Endothelial cell of umbilical vein (primary cell): ENCODE measurements at regions of chr20 and their contacts with region 1.

Region 1: GRCh38 chr20:33731693-33732165 is at the start of gene ZNF341:
- DNase-seq: peak; percentile 74
- H3K4me3 ChIP-seq: peak within 1 kb of the TSS; percentile 17 to 59 (median 51)
- H3K27ac ChIP-seq: peak within 1 kb of the TSS; percentile 53
- H3K4me1 ChIP-seq: peaks cover 22% of the 10 kb centered on the region
- H3K27me3 ChIP-seq: no peaks in the 10 kb centered on the region
- CTCF ChIP-seq: peak; percentile 89 to 96
- POLR2A ChIP-seq: peak; percentile 22
- total RNA-seq, gene ZNF341: 3.9 and 4.9 TPM in 2 replicates

Region 2: DNA sequence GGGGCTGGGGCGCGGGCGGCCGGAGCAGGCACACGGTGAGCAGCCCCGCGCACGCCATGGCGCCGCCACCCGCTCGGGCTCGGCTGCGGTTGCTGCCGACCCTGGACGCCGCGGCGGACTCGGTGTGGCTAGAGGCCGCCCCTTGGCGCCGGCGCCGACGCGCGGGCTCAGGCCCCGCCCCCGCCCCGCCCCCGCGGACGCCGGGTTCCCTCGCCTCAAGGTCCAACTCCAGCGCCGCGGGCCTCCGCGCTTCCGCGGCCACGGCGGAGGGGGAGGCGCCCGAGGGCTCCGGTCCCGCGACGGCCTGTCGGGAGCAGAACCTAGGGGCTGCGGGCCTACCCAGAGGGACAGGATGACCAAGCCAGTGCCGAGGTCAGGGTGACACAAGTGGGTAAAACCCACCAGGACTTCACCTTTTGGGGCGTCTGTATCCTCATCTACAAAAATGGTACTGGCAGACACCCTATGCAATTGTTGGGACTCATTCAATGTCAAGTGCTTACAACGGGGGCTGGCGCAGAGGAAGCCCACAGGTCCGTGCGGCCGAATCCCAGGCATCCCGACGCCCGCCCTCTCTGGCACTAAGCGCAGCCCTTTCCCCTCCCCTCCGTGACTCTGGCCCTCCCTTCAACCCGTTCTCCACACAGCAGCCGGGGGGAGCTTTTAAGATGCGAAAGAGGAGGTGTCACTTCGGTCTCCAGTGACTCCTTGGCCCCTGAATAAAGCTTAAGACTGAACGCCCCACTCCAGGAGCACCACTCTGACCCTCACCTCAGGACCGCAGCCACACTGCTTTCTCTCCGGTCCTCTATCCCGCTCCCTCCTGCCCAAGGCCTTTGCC is 57.2 kb before region 1 on chr20 and contains the start of gene NECAB3:
- CTCF ChIA-PET with region 1: interaction called, 3 read pairs
- POLR2A ChIA-PET with region 1: no interaction called
- dilution Hi-C with region 1: no loop called
- intact Hi-C with region 1: loop called (anchors 1 kb)
- DNase-seq: peak; percentile 84
- H3K4me3 ChIP-seq: peak within 1 kb of the TSS; percentile 47 to 56 (median 47)
- H3K27ac ChIP-seq: peak within 1 kb of the TSS; percentile 30
- H3K4me1 ChIP-seq: peaks cover 15% of the 10 kb centered on the region
- H3K27me3 ChIP-seq: no peaks in the 10 kb centered on the region
- CTCF ChIP-seq: no peak
- POLR2A ChIP-seq: peak; percentile 68
- total RNA-seq, gene NECAB3: 18.1 and 20.2 TPM in 2 replicates

Region 3: DNA sequence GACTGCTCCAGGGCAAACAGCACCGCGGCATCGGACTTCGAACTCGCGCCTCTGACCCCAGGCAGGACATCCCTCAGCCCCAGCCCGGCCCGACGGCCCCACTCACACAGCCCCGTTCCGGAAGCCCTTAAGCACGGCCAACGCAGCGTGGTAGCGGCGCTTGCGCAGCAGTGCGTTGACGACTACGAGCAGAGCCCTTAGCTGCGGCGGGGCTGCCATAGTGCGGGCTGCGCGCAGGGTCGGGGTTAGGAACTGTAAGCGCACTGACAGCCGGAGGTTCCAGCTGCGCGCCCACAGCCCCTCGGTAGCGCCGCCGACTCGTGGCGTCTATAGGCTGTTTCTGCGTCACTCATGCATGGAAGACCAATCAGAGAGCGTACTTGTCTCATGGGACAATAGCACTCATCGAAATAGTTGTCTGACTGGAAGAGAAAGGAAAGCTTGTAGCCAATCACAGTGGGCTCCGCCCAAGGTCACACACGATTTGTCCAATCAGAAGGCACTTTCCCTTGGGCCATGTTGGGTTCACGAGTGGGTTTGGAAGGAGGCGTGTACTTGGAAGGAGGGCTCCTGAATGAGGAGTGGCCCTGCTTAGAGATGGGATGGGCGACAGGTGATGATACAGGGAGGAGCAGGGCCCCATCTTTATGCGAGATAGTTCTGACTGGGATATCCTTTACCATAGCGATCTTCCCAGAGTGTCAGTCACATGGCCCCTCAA is 11.6 kb before region 1 on chr20 and contains the start of gene PXMP4:
- CTCF ChIA-PET with region 1: interaction called, 10 read pairs
- POLR2A ChIA-PET with region 1: no interaction called
- dilution Hi-C with region 1: no loop called
- intact Hi-C with region 1: no loop called
- DNase-seq: peak; percentile 97
- H3K4me3 ChIP-seq: peak within 1 kb of the TSS in 2 of 3 experiments; percentile 34 to 68
- H3K27ac ChIP-seq: no peak within 1 kb of the TSS
- H3K4me1 ChIP-seq: peaks cover 2% of the 10 kb centered on the region
- H3K27me3 ChIP-seq: no peaks in the 10 kb centered on the region
- CTCF ChIP-seq: no peak
- POLR2A ChIP-seq: peak; percentile 56
- total RNA-seq, gene PXMP4: 6.9 and 8.1 TPM in 2 replicates

Region 4: DNA sequence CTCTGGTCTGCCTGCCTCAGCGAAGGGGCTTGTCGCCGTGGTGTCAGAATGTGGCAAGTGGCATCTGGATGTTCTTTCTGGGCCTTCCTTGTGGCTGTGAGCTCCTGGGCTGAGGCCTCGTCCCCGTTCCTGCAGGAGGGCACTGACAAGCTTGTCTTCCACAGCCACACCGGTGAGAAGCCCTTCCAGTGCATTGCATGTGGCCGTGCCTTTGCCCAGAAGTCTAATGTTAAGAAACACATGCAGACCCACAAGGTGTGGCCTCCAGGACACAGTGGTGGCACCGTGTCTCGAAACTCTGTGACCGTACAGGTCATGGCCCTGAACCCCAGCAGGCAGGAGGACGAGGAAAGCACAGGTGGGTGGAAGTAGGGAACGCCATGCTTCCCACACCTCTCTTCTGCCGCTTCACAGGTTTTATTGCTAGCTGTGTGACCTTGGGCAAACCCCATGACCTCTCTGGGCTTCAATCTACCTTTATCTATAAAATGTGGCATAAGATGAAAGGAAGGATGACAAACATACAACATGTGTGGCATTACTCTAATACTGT is 30.0 kb after region 1 on chr20:
- CTCF ChIA-PET with region 1: no interaction called
- POLR2A ChIA-PET with region 1: no interaction called
- dilution Hi-C with region 1: no loop called
- intact Hi-C with region 1: no loop called
- DNase-seq: no peak
- H3K4me3 ChIP-seq: no peak overlapping the region
- H3K27ac ChIP-seq: no peak overlapping the region
- H3K4me1 ChIP-seq: no peaks in the 10 kb centered on the region
- H3K27me3 ChIP-seq: no peaks in the 10 kb centered on the region
- CTCF ChIP-seq: no peak
- POLR2A ChIP-seq: no peak

Region 5: DNA sequence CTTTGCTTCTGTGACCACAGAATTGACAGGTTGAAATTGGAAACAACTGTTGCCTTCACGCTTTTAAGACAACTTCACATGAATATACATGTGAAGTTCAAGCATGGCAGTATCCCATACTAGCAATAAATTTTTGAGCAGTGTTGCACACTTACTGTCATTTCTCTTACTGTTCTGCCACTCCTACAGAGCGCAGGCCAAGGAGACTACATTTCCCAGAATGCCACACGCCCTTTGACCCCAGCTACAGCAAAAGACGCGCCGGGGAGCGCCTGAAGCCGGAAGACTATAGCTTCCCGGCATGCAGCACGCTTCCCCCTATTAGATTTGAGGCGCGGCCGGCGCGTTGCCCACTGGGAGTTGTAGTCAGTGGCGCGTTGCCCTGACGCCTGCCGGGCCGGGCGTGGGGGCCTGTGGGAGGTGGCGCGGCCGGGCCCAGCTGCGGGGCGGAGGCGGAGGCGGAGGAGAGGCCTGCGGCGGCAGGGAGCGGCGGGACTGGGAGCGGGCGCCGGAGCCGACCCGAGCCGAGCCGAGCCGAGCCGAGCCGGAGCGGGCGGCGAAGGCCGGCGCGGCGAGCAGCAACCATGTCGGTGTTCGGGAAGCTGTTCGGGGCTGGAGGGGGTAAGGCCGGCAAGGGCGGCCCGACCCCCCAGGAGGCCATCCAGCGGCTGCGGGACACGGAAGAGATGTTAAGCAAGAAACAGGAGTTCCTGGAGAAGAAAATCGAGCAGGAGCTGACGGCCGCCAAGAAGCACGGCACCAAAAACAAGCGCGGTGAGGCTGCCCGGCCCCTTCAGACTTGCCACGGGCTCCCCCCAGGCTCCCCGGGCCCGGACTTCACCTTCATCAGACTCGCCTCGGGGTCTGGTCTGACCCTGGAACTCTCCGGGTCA is 79.4 kb after region 1 on chr20 and contains the start of gene CHMP4B:
- CTCF ChIA-PET with region 1: interaction called, 14 read pairs
- POLR2A ChIA-PET with region 1: interaction called, 3 read pairs
- dilution Hi-C with region 1: no loop called
- intact Hi-C with region 1: loop called (anchors 1 kb)
- DNase-seq: peak; percentile 98
- H3K4me3 ChIP-seq: peak within 1 kb of the TSS; percentile 60 to 86 (median 83)
- H3K27ac ChIP-seq: peak within 1 kb of the TSS; percentile 96
- H3K4me1 ChIP-seq: peaks cover 23% of the 10 kb centered on the region
- H3K27me3 ChIP-seq: no peaks in the 10 kb centered on the region
- CTCF ChIP-seq: no peak
- POLR2A ChIP-seq: peak; percentile 69
- total RNA-seq, gene CHMP4B: 105 and 112 TPM in 2 replicates

Region 6: GRCh38 chr20:34129518-34130162 is 397.9 kb after region 1 on chr20:
- CTCF ChIA-PET with region 1: no interaction called
- POLR2A ChIA-PET with region 1: no interaction called
- dilution Hi-C with region 1: no loop called
- intact Hi-C with region 1: loop called (anchors 5 kb)
- DNase-seq: peak; percentile 78
- H3K4me3 ChIP-seq: no peak overlapping the region
- H3K27ac ChIP-seq: no peak overlapping the region
- H3K4me1 ChIP-seq: peaks cover 3% of the 10 kb centered on the region
- H3K27me3 ChIP-seq: no peaks in the 10 kb centered on the region
- CTCF ChIP-seq: peak; percentile 61 to 76
- POLR2A ChIP-seq: no peak